PC-9 (cell line): ENCODE measurements at regions of chr9 and their contacts with region 1.

Region 1: GRCh38 chr9:73023025-73023541 is 70.2 kb upstream of the ALDH1A1 start:
- DNase-seq: peak; percentile 39 to 48
- H3K4me3 ChIP-seq: no peak overlapping the region
- H3K27ac ChIP-seq: no peak overlapping the region
- H3K4me1 ChIP-seq: no peaks in the 10 kb centered on the region
- H3K27me3 ChIP-seq: no peaks in the 10 kb centered on the region
- CTCF ChIP-seq: peak; percentile 64

Region 2: GRCh38 chr9:72827950-72828731 is 194.9 kb before region 1 on chr9:
- CTCF ChIA-PET with region 1: no interaction called
- POLR2A ChIA-PET with region 1: no interaction called
- intact Hi-C with region 1: loop called (anchors 2 kb)
- DNase-seq: peak; percentile 16 to 97
- H3K4me3 ChIP-seq: no peak overlapping the region
- H3K27ac ChIP-seq: peak overlapping the region; percentile 92
- H3K4me1 ChIP-seq: peaks cover 31% of the 10 kb centered on the region
- H3K27me3 ChIP-seq: no peaks in the 10 kb centered on the region
- CTCF ChIP-seq: no peak

Region 3: GRCh38 chr9:72871685-72872084 is 151.4 kb before region 1 on chr9:
- CTCF ChIA-PET with region 1: no interaction called
- POLR2A ChIA-PET with region 1: no interaction called
- intact Hi-C with region 1: loop called (anchors 1 kb)
- DNase-seq: no peak
- H3K4me3 ChIP-seq: no peak overlapping the region
- H3K27ac ChIP-seq: no peak overlapping the region
- H3K4me1 ChIP-seq: no peaks in the 10 kb centered on the region
- H3K27me3 ChIP-seq: no peaks in the 10 kb centered on the region
- CTCF ChIP-seq: peak; percentile 73

Region 4: DNA sequence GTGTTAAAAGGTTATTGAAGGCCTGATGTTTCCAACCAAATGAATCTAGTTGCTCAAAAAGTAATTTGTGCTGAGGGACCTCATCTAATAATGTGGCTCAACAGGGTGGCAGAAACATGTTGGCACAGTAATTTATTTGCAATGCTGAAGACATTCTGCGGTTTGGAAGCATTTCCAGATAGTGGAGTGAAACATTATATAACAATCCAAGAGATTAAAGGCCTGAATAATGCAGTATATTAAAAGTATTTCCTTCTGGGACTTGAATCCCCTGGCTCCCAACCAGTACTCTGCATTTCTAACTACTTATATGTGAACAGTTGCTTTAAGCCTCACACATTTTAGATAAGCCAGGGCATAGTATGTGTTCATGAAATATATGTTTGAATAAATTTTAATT is 44.3 kb before region 1 on chr9:
- CTCF ChIA-PET with region 1: no interaction called
- POLR2A ChIA-PET with region 1: no interaction called
- intact Hi-C with region 1: loop called (anchors 5 kb)
- DNase-seq: peak in 1 of 2 experiments; percentile 66
- H3K4me3 ChIP-seq: no peak overlapping the region
- H3K27ac ChIP-seq: peak overlapping the region; percentile 24; the same call in 1 of the 2 replicates
- H3K4me1 ChIP-seq: peaks cover 9% of the 10 kb centered on the region
- H3K27me3 ChIP-seq: no peaks in the 10 kb centered on the region
- CTCF ChIP-seq: no peak

Region 5: DNA sequence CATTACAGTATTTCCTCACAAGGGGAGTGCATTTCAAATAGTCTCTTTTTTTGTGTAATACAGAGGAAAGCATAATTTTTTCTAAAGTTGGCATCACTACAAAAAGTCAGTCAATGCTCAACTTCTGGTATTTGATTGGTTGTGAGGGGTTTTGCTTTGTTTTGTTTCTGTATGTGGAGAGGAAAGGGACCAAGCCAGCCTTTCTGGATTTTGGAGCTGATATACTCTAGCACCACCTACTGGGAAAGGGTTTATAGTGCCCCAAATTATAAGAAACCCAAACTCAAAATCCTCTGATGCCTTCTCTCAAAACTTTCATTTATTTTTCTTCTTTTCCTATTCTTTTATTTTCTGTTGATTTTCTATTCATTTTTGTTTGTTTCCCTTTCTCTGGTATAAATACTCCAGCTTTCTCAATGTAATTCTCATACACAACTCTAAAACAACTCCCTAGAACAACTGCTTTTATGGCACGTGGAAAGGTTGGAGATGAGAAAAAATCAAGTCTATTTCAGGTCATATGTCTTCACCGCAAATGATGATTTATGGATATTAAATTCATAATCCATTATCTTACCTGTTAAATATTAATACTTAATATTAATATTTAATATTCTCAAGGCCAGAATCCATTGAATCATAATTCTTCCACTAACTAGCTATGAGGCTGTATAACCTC is 59.0 kb after region 1 on chr9:
- CTCF ChIA-PET with region 1: no interaction called
- POLR2A ChIA-PET with region 1: no interaction called
- intact Hi-C with region 1: loop called (anchors 1 kb)
- DNase-seq: no peak
- H3K4me3 ChIP-seq: no peak overlapping the region
- H3K27ac ChIP-seq: no peak overlapping the region
- H3K4me1 ChIP-seq: peaks cover 22% of the 10 kb centered on the region
- H3K27me3 ChIP-seq: no peaks in the 10 kb centered on the region
- CTCF ChIP-seq: peak; percentile 78

Region 6: GRCh38 chr9:73423891-73424290 is 400.8 kb after region 1 on chr9:
- CTCF ChIA-PET with region 1: no interaction called
- POLR2A ChIA-PET with region 1: no interaction called
- intact Hi-C with region 1: no loop called
- DNase-seq: no peak
- H3K4me3 ChIP-seq: no peak overlapping the region
- H3K27ac ChIP-seq: no peak overlapping the region
- H3K4me1 ChIP-seq: no peaks in the 10 kb centered on the region
- H3K27me3 ChIP-seq: no peaks in the 10 kb centered on the region
- CTCF ChIP-seq: no peak